ENCODE measurements at regions of chr19 and their contacts with region 1.

Region 1: DNA sequence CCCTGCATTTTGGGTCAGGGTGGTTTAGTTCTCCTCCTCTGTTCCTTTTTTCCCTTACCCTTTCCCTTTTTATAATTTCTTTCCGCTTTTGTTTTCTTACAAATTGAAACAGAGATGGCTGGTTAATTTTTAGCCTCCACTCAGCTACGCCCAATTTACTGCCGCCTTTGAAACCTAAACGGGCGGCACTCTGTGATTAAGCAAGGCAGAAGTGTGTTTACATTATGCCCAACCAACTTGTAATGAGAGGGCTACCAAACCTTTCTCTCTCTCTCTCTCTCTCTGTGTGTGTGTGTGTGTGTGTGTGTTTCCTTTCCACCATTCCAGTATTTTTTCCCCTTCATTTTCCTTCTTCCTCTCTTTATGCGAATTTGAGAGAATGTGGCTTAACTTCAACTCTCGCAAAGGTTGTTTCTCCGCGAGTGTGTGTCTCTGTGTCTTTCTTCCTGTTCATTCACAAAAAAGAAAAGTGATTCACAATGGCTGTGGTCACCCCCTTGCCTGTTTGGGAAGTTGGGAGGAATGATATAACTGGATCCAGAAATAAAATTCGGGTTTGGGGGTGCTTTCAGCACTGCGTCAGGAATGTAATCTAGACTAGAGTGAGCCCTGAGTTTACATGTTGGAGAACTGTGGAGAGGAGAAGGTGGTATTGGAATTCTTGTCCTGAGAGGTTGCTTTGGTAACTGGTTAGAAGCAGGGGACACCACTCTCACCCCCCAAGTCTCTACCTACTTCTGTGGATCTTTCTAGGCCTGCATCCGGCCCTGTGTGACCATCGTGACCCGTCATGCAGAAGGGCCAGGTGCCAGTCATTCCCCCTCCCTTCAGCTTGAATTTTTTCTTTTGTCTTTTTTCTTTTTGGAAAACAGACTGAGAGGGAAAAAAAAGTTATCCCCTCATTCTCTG is 31.4 kb downstream of the NFIX start:
- DNase-seq: no peak
- H3K4me3 ChIP-seq: no peak overlapping the region
- CTCF ChIP-seq: no peak
- POLR2A ChIP-seq: no peak

Region 2: DNA sequence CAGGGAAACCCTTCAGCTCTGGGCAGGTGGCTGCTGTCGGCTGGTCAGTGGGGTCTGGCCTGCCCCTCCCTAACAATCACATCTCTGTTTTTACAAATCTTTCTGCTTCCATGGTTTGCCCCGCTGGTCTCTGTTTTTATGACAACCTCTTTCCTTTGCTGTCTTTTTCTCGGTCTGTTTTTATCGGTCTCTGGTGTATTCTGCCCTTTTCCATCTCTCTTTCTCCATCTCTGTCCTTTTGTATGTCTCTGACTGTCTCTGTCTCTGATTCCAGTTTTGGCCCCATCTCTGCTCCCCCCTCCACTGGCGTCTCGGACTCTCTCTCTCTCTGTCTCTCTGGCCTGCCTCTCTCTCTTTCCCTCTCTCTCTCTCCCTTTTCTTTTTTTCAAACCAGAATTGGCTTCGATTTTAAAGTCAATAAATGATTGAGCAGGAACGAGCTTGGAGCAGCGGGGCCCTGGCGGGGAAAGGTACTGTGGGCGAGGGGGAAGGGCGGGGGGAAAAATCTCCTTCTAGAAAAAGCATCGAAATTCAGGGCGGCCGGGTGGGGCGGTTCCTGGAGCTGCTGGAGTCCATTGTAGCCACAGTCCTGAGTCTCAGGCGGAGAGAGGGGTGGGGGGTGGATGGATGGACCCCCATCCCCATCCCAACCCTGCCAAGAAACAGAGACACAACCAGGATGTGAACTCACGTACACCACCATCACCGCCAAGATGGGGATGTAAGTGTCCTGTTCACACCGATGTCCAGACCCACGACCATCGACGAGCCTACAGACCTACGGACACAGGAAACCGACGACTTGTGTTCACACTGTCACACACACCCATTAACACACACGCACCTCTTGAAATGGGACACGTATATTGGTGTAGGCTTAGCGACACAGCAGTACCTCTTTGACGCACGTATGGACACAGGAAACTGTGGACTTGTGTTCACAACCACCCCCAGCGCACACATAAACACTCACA is 28.5 kb before region 1 on chr19:
- intact Hi-C with region 1: loop called (anchors 1 kb)
- DNase-seq: no peak
- H3K4me3 ChIP-seq: no peak overlapping the region
- CTCF ChIP-seq: no peak
- POLR2A ChIP-seq: no peak

Region 3: DNA sequence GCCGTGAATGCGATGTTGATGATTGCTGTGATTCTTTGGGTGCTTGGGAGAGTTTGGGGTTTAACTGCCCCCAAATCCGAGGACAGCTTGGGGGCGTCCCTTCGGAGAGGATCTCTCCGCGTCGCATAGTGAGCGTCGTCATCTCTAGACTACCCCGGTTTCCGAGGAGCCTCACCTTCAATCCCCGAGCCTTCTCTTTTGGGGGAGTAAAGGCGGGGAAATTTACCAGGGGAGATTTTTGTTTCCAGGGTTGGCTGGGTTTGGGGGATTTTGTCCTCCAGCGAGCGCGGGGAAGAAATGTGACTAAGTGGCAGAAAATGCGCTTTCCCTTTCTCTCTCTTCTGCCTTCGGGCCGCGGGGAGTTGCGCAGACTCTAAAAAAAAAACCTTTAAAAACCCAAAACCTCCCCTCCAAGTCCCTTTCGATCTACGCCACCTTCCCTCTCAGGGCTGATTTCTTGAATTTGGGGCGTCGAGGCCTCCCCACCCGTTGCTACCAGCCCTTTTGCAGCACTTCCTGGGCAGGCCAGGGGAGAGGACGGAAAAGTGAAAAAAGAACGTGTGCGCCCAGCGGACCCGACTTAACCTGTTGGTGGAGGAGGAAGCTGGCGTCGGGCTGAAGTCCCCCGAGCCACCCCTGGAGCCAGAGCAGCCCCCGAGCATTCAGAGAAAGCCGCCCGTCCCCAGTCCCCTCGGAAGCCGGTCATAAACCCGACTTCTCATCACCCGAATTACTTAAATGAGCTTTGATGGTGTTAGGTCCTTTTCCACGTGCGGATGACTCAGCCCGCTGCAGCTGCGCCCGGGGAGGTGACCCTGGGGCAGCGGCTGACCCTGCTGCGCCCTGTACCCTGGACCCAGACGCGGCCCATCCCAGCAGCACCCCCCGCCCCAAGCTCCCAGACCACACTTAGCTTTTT is 13.8 kb before region 1 on chr19:
- intact Hi-C with region 1: no loop called
- DNase-seq: peak; percentile 74 to 95
- H3K4me3 ChIP-seq: peak overlapping the region; percentile 7
- CTCF ChIP-seq: no peak
- POLR2A ChIP-seq: no peak

Region 4: DNA sequence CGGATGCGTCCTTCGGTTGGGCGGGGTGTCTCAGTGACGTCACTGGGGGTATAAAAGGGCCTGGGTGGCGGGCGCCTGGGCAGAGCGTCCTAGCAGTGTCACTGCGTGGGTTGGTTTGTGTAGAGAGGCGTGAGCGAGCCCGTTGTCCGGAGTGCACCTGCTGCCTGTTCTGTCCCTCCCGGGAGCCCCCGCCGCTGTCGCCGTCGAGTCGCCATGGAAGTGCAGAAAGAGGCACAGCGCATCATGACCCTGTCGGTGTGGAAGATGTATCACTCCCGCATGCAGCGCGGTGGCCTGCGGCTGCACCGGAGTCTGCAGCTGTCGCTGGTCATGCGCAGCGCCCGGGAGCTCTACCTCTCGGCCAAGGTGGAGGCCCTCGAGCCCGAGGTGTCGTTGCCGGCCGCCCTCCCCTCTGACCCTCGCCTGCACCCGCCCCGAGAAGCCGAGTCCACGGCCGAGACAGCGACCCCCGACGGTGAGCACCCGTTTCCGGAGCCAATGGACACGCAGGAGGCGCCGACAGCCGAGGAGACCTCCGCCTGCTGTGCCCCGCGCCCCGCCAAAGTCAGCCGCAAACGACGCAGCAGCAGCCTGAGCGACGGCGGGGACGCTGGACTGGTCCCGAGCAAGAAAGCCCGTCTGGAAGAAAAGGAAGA is 126.4 kb after region 1 on chr19:
- intact Hi-C with region 1: no loop called
- DNase-seq: peak; percentile 95 to 100
- H3K4me3 ChIP-seq: peak overlapping the region; percentile 91
- CTCF ChIP-seq: no peak
- POLR2A ChIP-seq: peak in 1 of 2 donors; percentile 99

Measured in lower leg skin (tissue), 4 donors.